CD14-positive monocyte (primary cell): ENCODE measurements at regions of chr10 and their contacts with region 1.

Region 1: GRCh38 chr10:97584798-97585437 is 729 bp downstream of the HOGA1 start:
- DNase-seq: no peak
- H3K4me3 ChIP-seq: no peak overlapping the region
- H3K4me3 Mint-ChIP-seq: no peak overlapping the region
- H3K27ac ChIP-seq: no peak overlapping the region
- H3K27ac Mint-ChIP-seq: peak overlapping the region in 1 of 7 donors; percentile 59
- H3K4me1 ChIP-seq: no peaks in the 10 kb centered on the region
- H3K4me1 Mint-ChIP-seq: no peaks in the 10 kb centered on the region
- H3K27me3 ChIP-seq: no peaks in the 10 kb centered on the region
- H3K27me3 Mint-ChIP-seq: peaks cover 0 to 3% (median 0%) of the 10 kb centered on the region in 3 donors
- CTCF ChIP-seq: no peak

Region 2: GRCh38 chr10:96973809-96974747 is 610.8 kb before region 1 on chr10:
- intact Hi-C with region 1: loop called in 1 of 2 experiments (anchors 5 kb)
- DNase-seq: no peak
- H3K4me3 ChIP-seq: no peak overlapping the region
- H3K4me3 Mint-ChIP-seq: no peak overlapping the region
- H3K27ac ChIP-seq: peak overlapping the region in 1 of 2 donors; percentile 29
- H3K27ac Mint-ChIP-seq: no peak overlapping the region
- H3K4me1 ChIP-seq: no peaks in the 10 kb centered on the region
- H3K4me1 Mint-ChIP-seq: peaks cover 8% of the 10 kb centered on the region
- H3K27me3 ChIP-seq: no peaks in the 10 kb centered on the region
- H3K27me3 Mint-ChIP-seq: no peaks in the 10 kb centered on the region
- CTCF ChIP-seq: no peak